Activated CD4-positive, alpha-beta memory T cell treated with anti-CD3 and anti-CD28 coated beads for 36 hours (primary cell): ENCODE measurements at regions of chr20 and their contacts with region 1.

Region 1: DNA sequence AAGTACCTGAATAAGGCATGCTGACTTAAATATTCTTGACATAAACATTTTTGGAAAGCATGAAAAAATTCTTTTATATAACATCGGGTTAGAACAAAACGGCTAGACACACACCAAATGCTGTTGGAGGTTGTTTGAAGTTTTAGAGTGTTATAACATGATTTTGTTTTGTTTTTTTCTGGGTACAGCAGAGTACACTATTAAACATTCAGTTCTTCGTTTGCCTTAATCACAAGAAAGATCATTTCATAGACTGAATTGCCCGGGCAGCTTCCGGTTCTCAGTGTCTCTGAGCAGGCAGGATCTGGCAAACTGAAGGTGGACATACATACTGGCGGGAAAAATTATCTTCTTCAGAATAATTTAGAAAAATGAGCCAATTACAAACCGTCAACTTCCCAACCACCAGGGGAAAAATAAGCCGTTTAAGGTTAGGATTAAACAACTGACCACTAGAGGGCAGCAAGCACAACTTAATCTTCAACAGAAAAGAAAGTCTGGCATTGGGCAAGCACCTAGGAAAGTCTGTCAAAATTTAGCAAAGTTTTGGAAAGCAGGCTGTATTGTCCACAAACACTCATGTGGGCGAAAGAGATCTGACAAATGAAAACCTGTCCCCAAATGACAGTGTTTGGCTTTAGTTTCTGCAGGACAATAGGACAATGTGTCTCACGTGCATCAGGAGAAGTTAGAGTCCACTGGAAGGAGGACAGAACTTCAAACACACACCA is 15.0 kb downstream of the ZNF217 start:
- DNase-seq: peak; percentile 48
- H3K4me3 Mint-ChIP-seq: peak overlapping the region; percentile 82
- H3K27ac Mint-ChIP-seq: peak overlapping the region; percentile 97
- H3K4me1 Mint-ChIP-seq: peaks cover 85% of the 10 kb centered on the region
- H3K27me3 Mint-ChIP-seq: no peaks in the 10 kb centered on the region

Region 2: DNA sequence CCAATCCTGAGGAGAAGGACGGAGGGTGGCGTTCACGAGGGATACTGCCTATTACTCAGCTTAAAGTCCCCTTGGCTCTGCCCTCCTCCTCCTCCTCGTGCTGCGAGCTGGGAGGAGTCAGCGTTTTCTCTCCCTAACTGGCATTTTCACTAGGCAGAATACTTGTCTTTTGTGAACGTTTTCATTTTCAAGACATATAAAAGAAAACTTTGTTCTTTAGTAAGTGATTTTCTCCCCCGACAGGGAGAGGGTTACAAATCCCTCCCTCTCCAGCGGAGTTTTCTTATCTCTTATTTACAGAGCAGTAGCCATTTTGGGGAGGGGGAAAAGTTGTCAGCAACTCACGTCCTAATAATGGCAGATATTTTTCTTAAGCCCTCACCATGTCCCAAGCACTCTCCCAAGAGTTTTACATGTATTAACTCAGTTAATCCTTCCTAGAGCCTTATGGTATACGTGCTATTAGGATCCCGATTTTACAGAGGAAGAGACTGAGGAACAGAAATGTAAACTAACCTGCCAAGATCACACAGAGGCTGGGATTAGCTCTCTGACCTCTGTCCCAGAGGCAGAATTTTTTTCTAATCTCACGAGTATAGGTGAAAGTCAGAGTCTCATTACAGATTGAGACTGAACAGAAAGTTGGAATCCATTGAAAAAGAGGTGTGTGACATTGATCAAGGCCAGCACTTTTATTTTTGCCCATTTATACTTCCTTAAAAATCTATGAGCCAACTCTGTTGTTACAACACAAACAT is 45.0 kb after region 1 on chr20:
- CTCF ChIA-PET with region 1: interaction called, 7 read pairs
- POLR2A ChIA-PET with region 1: interaction called, 3 read pairs
- intact Hi-C with region 1: loop called (anchors 5 kb)
- DNase-seq: peak; percentile 59
- H3K4me3 Mint-ChIP-seq: peak overlapping the region; percentile 73
- H3K27ac Mint-ChIP-seq: peak overlapping the region; percentile 88
- H3K4me1 Mint-ChIP-seq: peaks cover 35% of the 10 kb centered on the region
- H3K27me3 Mint-ChIP-seq: no peaks in the 10 kb centered on the region

Region 3: DNA sequence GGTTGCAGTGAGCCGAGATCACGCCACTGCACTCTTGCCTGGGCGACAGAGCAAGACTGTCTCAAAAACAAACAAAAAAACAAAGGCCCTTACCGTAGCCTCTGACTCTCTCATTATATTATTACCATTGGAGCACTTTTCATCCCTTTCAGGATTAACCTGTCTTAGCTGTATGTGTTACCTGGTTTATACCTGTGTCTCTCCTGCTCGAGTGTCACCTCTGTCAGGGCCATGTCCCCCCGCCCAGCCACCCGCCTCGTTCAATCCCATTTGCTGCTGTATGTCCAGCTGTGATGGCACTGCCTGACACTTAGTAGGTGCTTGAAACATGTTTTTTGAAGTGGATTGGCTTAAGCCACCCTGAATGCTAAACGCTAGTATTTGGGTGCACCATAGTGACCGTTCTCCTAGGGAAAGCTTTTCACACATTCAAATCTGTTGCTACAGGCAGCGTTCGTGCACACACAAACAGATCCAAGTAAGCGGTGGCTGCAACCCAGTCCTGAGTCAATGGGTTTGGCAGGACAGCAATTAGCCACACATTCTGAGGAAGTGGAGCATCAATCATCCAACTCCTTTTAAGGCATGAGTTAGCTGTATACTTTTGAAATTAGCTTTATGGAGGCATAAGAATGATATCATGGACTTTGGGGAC is 113.9 kb after region 1 on chr20:
- CTCF ChIA-PET with region 1: no interaction called
- POLR2A ChIA-PET with region 1: no interaction called
- intact Hi-C with region 1: loop called (anchors 2 kb)
- DNase-seq: peak; percentile 33
- H3K4me3 Mint-ChIP-seq: no peak overlapping the region
- H3K27ac Mint-ChIP-seq: peak overlapping the region; percentile 1
- H3K4me1 Mint-ChIP-seq: peaks cover 22% of the 10 kb centered on the region
- H3K27me3 Mint-ChIP-seq: no peaks in the 10 kb centered on the region

Region 4: GRCh38 chr20:53869466-53870258 is 291.0 kb after region 1 on chr20:
- CTCF ChIA-PET with region 1: interaction called, 9 read pairs
- POLR2A ChIA-PET with region 1: interaction called, 5 read pairs
- intact Hi-C with region 1: loop called (anchors 1 kb)
- DNase-seq: peak; percentile 87
- H3K4me3 Mint-ChIP-seq: peak overlapping the region; percentile 52
- H3K27ac Mint-ChIP-seq: peak overlapping the region; percentile 77
- H3K4me1 Mint-ChIP-seq: peaks cover 68% of the 10 kb centered on the region
- H3K27me3 Mint-ChIP-seq: no peaks in the 10 kb centered on the region

Region 5: DNA sequence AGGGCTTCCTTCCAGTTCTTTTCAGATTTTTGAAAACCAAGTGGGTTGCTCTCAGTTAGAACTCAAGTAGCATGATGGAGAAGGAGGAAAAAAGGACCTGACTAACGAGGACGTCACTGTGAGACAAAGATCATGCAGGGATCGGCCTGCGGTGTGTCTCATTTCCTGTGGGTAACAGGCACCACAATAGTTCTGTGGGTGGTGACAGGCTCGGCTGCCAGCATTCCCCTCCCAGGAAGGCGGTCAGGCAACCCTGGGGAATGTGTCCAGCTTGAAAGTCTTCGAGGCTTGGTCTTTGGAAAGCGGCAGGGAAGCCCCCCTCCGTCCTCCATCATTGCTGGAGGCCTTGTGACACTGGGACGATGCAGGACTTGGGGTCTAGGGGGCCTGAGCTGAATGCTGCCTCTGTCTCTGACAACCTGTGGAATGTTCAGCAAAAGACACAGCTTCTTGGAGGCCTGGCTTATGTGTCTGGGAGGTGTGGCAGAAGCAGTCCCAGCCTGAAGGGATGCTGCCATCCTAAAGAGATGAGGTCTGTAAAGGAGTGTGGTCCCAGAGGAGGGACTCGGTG is 370.7 kb after region 1 on chr20:
- CTCF ChIA-PET with region 1: interaction called, 6 read pairs
- POLR2A ChIA-PET with region 1: no interaction called
- intact Hi-C with region 1: loop called (anchors 2 kb)
- DNase-seq: peak; percentile 90
- H3K4me3 Mint-ChIP-seq: peak overlapping the region; percentile 66
- H3K27ac Mint-ChIP-seq: peak overlapping the region; percentile 87
- H3K4me1 Mint-ChIP-seq: peaks cover 29% of the 10 kb centered on the region
- H3K27me3 Mint-ChIP-seq: no peaks in the 10 kb centered on the region